Natural killer cell (primary cell): ENCODE measurements at regions of chr11 and their contacts with region 1.

Region 1: GRCh38 chr11:63838678-63839507 is at the start of gene MARK2:
- DNase-seq: peak; percentile 100
- ATAC-seq: peak; percentile 81 to 93 (median 84)
- H3K4me3 ChIP-seq: peak within 1 kb of the TSS; percentile 91
- H3K4me3 Mint-ChIP-seq: peak within 1 kb of the TSS; percentile 89
- H3K27ac ChIP-seq: peak within 1 kb of the TSS; percentile 59
- H3K27ac Mint-ChIP-seq: peak within 1 kb of the TSS; percentile 75 to 86
- H3K4me1 ChIP-seq: peaks cover 50% of the 10 kb centered on the region
- H3K4me1 Mint-ChIP-seq: peaks cover 57 to 60% of the 10 kb centered on the region in 2 donors
- H3K27me3 ChIP-seq: no peaks in the 10 kb centered on the region
- H3K27me3 Mint-ChIP-seq: no peaks in the 10 kb centered on the region
- CTCF ChIP-seq: no peak
- total RNA-seq, gene MARK2: 63.8 to 88.4 (median 80.2) TPM

Region 2: GRCh38 chr11:63719977-63720376 is 118.9 kb before region 1 on chr11:
- intact Hi-C with region 1: no loop called
- DNase-seq: no peak
- ATAC-seq: no peak
- H3K4me3 ChIP-seq: no peak overlapping the region
- H3K4me3 Mint-ChIP-seq: no peak overlapping the region
- H3K27ac ChIP-seq: no peak overlapping the region
- H3K27ac Mint-ChIP-seq: no peak overlapping the region
- H3K4me1 ChIP-seq: no peaks in the 10 kb centered on the region
- H3K4me1 Mint-ChIP-seq: peaks cover 0 to 5% of the 10 kb centered on the region in 2 donors
- H3K27me3 ChIP-seq: no peaks in the 10 kb centered on the region
- H3K27me3 Mint-ChIP-seq: no peaks in the 10 kb centered on the region
- CTCF ChIP-seq: no peak

Region 3: GRCh38 chr11:63866211-63866610 is 27.3 kb after region 1 on chr11:
- intact Hi-C with region 1: loop called (anchors 1 kb)
- DNase-seq: peak; percentile 60 to 90
- ATAC-seq: peak; percentile 86 to 93 (median 90)
- H3K4me3 ChIP-seq: no peak overlapping the region
- H3K4me3 Mint-ChIP-seq: peak overlapping the region; percentile 81
- H3K27ac ChIP-seq: peak overlapping the region; percentile 79
- H3K27ac Mint-ChIP-seq: peak overlapping the region; percentile 81 to 87
- H3K4me1 ChIP-seq: peaks cover 79% of the 10 kb centered on the region
- H3K4me1 Mint-ChIP-seq: peaks cover 75 to 78% of the 10 kb centered on the region in 2 donors
- H3K27me3 ChIP-seq: no peaks in the 10 kb centered on the region
- H3K27me3 Mint-ChIP-seq: no peaks in the 10 kb centered on the region
- CTCF ChIP-seq: no peak

Region 4: DNA sequence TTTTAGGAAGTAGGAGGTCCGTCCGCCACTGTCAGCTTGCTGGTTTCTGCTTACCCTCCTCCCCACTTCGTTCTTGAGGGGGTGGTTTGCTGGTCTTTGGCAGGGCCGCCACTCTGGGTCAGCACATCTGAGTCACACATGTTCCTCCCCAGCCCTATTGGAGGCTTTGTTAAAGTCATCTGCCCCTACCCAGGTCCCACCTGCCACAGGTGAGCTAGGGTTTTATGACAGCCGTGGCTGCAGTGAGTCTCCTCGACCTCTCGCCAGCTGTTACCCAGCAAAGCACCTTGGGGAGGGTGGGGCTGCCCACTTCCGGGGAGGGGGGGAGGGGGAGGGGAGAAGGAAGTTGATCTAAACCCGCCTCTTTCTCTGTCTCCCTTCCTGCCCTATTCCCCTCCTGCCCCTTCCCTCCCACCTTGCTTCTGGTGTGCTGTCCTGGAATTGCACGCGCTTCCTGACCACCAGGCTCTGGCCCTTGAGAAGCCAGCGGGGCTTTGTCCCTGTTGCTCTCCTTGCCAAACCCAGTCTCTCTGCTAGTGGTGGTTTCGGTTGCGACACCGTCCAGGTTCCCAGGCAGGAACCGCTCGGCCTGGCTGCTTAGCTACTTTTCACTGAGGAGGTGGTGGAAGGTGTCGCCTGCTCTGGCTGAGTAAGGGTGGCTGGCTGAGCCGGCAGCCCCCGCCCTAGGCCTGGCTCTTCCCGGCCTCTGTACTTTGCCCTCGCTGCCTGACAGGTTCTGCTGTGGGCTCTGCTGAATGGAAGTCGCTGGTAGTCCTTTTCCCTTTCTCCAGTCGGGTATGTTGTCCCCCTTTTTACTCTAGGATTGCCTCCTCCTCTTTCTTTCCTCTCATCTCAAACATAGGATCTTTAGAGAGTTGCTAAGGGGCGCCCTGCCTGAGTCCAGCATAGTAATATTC is 49.5 kb after region 1 on chr11:
- intact Hi-C with region 1: loop called (anchors 5 kb)
- DNase-seq: peak; percentile 55 to 86
- ATAC-seq: peak; percentile 77 to 86 (median 82)
- H3K4me3 ChIP-seq: peak overlapping the region; percentile 70
- H3K4me3 Mint-ChIP-seq: peak overlapping the region; percentile 93
- H3K27ac ChIP-seq: peak overlapping the region; percentile 90
- H3K27ac Mint-ChIP-seq: peak overlapping the region; percentile 94
- H3K4me1 ChIP-seq: peaks cover 73% of the 10 kb centered on the region
- H3K4me1 Mint-ChIP-seq: peaks cover 70 to 75% of the 10 kb centered on the region in 2 donors
- H3K27me3 ChIP-seq: no peaks in the 10 kb centered on the region
- H3K27me3 Mint-ChIP-seq: no peaks in the 10 kb centered on the region
- CTCF ChIP-seq: no peak

Region 5: DNA sequence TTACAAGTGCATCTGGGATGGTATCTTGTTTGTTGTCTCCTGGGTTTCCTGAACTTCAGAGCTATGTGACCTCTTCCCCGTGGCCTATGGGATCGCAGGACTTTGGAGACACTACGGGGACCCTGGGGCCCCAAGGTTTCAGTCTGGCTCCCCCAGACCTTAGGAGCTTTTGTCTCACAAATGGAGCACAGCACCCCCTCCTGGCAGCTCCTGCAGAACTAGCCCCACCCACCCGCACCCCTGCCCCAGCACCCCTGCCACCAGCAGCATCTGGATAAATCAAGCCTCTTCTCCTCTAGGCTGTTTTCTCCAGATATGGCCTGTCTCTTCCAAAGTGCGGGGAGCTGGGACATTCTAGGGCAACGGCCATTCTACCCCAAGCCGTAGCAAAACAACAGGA is 67.7 kb after region 1 on chr11:
- intact Hi-C with region 1: loop called (anchors 1 kb)
- DNase-seq: peak; percentile 34 to 78
- ATAC-seq: peak in 2 of 3 donors; percentile 49 to 56
- H3K4me3 ChIP-seq: no peak overlapping the region
- H3K4me3 Mint-ChIP-seq: no peak overlapping the region
- H3K27ac ChIP-seq: no peak overlapping the region
- H3K27ac Mint-ChIP-seq: peak overlapping the region in 1 of 2 donors; percentile 20
- H3K4me1 ChIP-seq: no peaks in the 10 kb centered on the region
- H3K4me1 Mint-ChIP-seq: peaks cover 4 to 14% of the 10 kb centered on the region in 2 donors
- H3K27me3 ChIP-seq: no peaks in the 10 kb centered on the region
- H3K27me3 Mint-ChIP-seq: no peaks in the 10 kb centered on the region
- CTCF ChIP-seq: peak; percentile 28

Region 6: DNA sequence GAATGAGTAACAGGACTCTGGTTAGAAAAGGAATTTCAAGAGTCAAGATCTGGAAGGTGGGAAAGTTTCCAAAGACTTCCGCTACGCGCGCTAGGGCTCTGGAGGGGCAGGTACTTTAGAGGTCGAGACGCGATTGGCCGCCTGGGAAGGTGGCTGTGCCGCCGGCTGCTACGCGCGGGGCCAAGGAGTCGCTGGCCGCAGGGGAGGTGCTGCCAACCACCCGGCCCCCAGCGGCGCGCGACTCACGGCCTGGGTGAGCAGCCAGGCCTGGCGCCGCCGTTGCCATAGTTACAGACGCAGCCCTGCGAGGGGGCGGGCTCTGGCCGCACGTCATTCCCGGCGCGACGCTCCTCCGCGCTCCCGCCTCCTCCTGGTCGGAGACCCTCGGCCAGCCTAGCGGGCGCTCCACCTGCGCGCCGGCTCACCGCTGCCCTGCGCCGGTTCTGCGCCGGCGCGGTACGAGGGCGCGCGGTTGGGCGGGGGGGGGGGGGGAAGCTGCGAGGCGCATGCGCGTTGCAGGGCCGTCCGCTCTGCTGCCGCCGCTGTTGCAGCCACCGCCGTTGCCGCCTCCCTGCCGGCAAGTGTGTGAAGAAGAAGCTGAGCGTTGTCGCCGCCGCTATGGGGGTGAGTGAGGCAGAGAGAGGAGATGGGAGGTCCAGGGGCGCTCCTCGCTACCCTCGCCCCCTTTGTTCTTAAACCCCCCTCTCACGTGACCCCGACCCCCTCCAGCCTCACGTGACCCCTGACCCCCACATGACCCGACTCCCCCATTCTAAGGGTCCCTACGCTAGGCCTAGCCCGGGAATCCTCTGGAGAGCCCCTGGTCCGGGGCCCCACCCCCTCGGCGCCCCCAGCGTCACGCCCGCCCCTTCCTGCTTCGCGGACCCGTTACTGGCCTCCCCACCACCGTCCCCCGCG is 99.8 kb after region 1 on chr11 and contains the start of gene NAA40:
- intact Hi-C with region 1: loop called (anchors 2 kb)
- DNase-seq: peak; percentile 91 to 97
- ATAC-seq: peak; percentile 89 to 94 (median 91)
- H3K4me3 ChIP-seq: peak within 1 kb of the TSS; percentile 66
- H3K4me3 Mint-ChIP-seq: peak within 1 kb of the TSS; percentile 89
- H3K27ac ChIP-seq: peak within 1 kb of the TSS; percentile 70
- H3K27ac Mint-ChIP-seq: peak within 1 kb of the TSS; percentile 83 to 91
- H3K4me1 ChIP-seq: peaks cover 19% of the 10 kb centered on the region
- H3K4me1 Mint-ChIP-seq: peaks cover 30 to 31% of the 10 kb centered on the region in 2 donors
- H3K27me3 ChIP-seq: no peaks in the 10 kb centered on the region
- H3K27me3 Mint-ChIP-seq: no peaks in the 10 kb centered on the region
- CTCF ChIP-seq: no peak
- total RNA-seq, gene NAA40: 44.8 to 72.1 (median 57.4) TPM

Region 7: GRCh38 chr11:63945477-63946163 is 106.7 kb after region 1 on chr11:
- intact Hi-C with region 1: loop called (anchors 1 kb)
- DNase-seq: peak; percentile 30 to 75
- ATAC-seq: peak in 2 of 3 donors; percentile 81 to 89
- H3K4me3 ChIP-seq: no peak overlapping the region
- H3K4me3 Mint-ChIP-seq: no peak overlapping the region
- H3K27ac ChIP-seq: no peak overlapping the region
- H3K27ac Mint-ChIP-seq: no peak overlapping the region
- H3K4me1 ChIP-seq: peaks cover 13% of the 10 kb centered on the region
- H3K4me1 Mint-ChIP-seq: peaks cover 9% of the 10 kb centered on the region in 2 donors
- H3K27me3 ChIP-seq: no peaks in the 10 kb centered on the region
- H3K27me3 Mint-ChIP-seq: no peaks in the 10 kb centered on the region
- CTCF ChIP-seq: peak; percentile 57

Region 8: GRCh38 chr11:64152841-64153691 is 314.2 kb after region 1 on chr11:
- intact Hi-C with region 1: loop called (anchors 1 kb)
- DNase-seq: peak; percentile 72 to 82
- ATAC-seq: peak; percentile 87 to 98 (median 96)
- H3K4me3 ChIP-seq: no peak overlapping the region
- H3K4me3 Mint-ChIP-seq: no peak overlapping the region
- H3K27ac ChIP-seq: no peak overlapping the region
- H3K27ac Mint-ChIP-seq: no peak overlapping the region
- H3K4me1 ChIP-seq: peaks cover 6% of the 10 kb centered on the region
- H3K4me1 Mint-ChIP-seq: peaks cover 11% of the 10 kb centered on the region in 2 donors
- H3K27me3 ChIP-seq: no peaks in the 10 kb centered on the region
- H3K27me3 Mint-ChIP-seq: peaks cover 0 to 12% of the 10 kb centered on the region in 2 donors
- CTCF ChIP-seq: peak; percentile 99